CD4-positive, alpha-beta memory T cell (primary cell): ENCODE measurements at regions of chr14 and their contacts with region 1.

Region 1: GRCh38 chr14:95561001-95561412 is 26.2 kb downstream of the GLRX5 start:
- DNase-seq: peak; percentile 69 to 79 (median 78)
- H3K4me3 ChIP-seq: no peak overlapping the region
- H3K4me3 Mint-ChIP-seq: no peak overlapping the region
- H3K27ac ChIP-seq: no peak overlapping the region
- H3K27ac Mint-ChIP-seq: no peak overlapping the region
- H3K4me1 ChIP-seq: no peaks in the 10 kb centered on the region
- H3K4me1 Mint-ChIP-seq: peaks cover 3 to 5% (median 4%) of the 10 kb centered on the region in 4 donors
- H3K27me3 ChIP-seq: no peaks in the 10 kb centered on the region
- H3K27me3 Mint-ChIP-seq: peaks cover 2 to 5% of the 10 kb centered on the region in 2 donors

Region 2: GRCh38 chr14:94775873-94776208 is 785.2 kb before region 1 on chr14:
- CTCF ChIA-PET with region 1: no interaction called
- POLR2A ChIA-PET with region 1: no interaction called
- intact Hi-C with region 1: no loop called
- DNase-seq: no peak
- H3K4me3 ChIP-seq: no peak overlapping the region
- H3K4me3 Mint-ChIP-seq: no peak overlapping the region
- H3K27ac ChIP-seq: no peak overlapping the region
- H3K27ac Mint-ChIP-seq: peak overlapping the region in 1 of 7 donors; percentile 22
- H3K4me1 ChIP-seq: no peaks in the 10 kb centered on the region
- H3K4me1 Mint-ChIP-seq: peaks cover 4 to 12% (median 8%) of the 10 kb centered on the region in 4 donors
- H3K27me3 ChIP-seq: peaks cover 48% of the 10 kb centered on the region
- H3K27me3 Mint-ChIP-seq: peaks cover 57 to 69% of the 10 kb centered on the region in 2 donors

Region 3: GRCh38 chr14:95545179-95546168 is 15.5 kb before region 1 on chr14:
- CTCF ChIA-PET with region 1: interaction called, 11 read pairs
- POLR2A ChIA-PET with region 1: no interaction called
- intact Hi-C with region 1: no loop called
- DNase-seq: no peak
- H3K4me3 ChIP-seq: no peak overlapping the region
- H3K4me3 Mint-ChIP-seq: no peak overlapping the region
- H3K27ac ChIP-seq: no peak overlapping the region
- H3K27ac Mint-ChIP-seq: no peak overlapping the region
- H3K4me1 ChIP-seq: peaks cover 5% of the 10 kb centered on the region
- H3K4me1 Mint-ChIP-seq: peaks cover 0 to 15% (median 2%) of the 10 kb centered on the region in 4 donors
- H3K27me3 ChIP-seq: no peaks in the 10 kb centered on the region
- H3K27me3 Mint-ChIP-seq: no peaks in the 10 kb centered on the region

Region 4: DNA sequence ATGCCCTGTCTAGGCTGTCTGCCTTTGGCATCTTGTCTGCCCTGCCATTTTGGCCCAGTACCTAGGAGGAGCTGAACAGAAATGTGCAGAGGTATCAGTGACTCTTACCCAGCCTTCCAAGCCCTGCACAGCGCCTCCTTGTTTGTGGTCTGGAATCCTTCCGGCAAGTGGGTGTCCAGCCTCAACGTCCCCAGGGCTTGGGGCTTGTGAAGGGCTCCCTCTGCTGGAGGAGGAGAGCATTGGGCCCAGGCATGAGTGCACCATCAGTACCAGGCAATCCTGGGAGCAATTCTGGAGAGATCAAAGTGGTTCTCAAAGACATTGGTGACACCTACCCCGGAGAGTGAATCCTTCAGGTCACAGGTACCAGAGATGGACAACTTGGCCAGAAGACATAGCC is 122.8 kb after region 1 on chr14:
- CTCF ChIA-PET with region 1: interaction called, 18 read pairs
- POLR2A ChIA-PET with region 1: no interaction called
- intact Hi-C with region 1: loop called (anchors 1 kb)
- DNase-seq: peak in 3 of 5 donors; percentile 9 to 26 (median 13)
- H3K4me3 ChIP-seq: no peak overlapping the region
- H3K4me3 Mint-ChIP-seq: no peak overlapping the region
- H3K27ac ChIP-seq: no peak overlapping the region
- H3K27ac Mint-ChIP-seq: no peak overlapping the region
- H3K4me1 ChIP-seq: no peaks in the 10 kb centered on the region
- H3K4me1 Mint-ChIP-seq: no peaks in the 10 kb centered on the region
- H3K27me3 ChIP-seq: no peaks in the 10 kb centered on the region
- H3K27me3 Mint-ChIP-seq: peaks cover 6 to 23% of the 10 kb centered on the region in 2 donors

Region 5: GRCh38 chr14:95774265-95775160 is 213.5 kb after region 1 on chr14:
- CTCF ChIA-PET with region 1: interaction called, 17 read pairs
- POLR2A ChIA-PET with region 1: no interaction called
- intact Hi-C with region 1: loop called (anchors 1 kb)
- DNase-seq: peak in 4 of 5 donors; percentile 26 to 37 (median 28)
- H3K4me3 ChIP-seq: no peak overlapping the region
- H3K4me3 Mint-ChIP-seq: no peak overlapping the region
- H3K27ac ChIP-seq: no peak overlapping the region
- H3K27ac Mint-ChIP-seq: no peak overlapping the region
- H3K4me1 ChIP-seq: no peaks in the 10 kb centered on the region
- H3K4me1 Mint-ChIP-seq: peaks cover 0 to 2% (median under 1%) of the 10 kb centered on the region in 4 donors
- H3K27me3 ChIP-seq: no peaks in the 10 kb centered on the region
- H3K27me3 Mint-ChIP-seq: peaks cover 5 to 14% of the 10 kb centered on the region in 2 donors